ENCODE measurements at regions of chr20 and their contacts with region 1.

Region 1: DNA sequence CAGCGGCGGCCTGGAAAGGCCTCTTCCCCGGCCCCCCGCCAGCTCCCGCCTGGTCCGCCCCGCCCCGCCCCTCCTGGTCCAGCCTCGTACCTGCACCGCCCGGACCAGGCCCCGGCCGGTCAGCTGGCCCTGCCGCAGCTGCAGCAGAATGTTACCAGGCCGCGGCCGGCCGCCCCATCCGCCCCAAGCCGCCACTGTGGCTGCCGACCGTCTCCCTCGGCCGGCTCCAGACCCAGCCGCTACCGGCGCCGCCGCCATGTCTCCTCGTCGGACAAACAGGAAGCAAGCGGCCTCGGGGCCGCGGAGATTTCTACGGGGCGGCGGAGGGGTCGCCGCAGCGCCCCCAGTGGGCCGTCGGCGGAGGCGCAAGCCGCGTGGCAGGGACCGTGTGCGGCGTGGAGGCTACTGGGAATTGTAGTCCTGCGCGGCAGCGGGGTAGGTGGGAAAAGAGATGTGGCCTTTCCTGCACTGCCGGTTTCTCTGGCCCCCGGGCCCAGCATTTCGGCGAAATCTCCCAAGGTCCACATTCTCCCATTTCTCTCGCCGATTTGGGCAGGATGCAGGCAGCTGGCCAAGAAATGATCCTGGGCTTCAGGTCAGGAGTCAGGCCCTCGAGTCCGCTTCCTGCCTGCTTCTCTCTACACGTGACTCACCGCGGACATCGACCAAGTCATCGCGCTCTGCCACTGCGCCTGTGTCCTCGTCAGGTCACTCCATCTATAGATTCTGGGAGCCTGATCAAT is at the start of gene TRPC4AP:
- DNase-seq: peak; percentile 78 to 98 (median 86)

Region 2: GRCh38 chr20:34872622-34873224 is 220.0 kb before region 1 on chr20 and contains the start of gene GGT7:
- intact Hi-C with region 1: loop called (anchors 2 kb)
- DNase-seq: peak; percentile 79 to 97 (median 86)

Region 3: DNA sequence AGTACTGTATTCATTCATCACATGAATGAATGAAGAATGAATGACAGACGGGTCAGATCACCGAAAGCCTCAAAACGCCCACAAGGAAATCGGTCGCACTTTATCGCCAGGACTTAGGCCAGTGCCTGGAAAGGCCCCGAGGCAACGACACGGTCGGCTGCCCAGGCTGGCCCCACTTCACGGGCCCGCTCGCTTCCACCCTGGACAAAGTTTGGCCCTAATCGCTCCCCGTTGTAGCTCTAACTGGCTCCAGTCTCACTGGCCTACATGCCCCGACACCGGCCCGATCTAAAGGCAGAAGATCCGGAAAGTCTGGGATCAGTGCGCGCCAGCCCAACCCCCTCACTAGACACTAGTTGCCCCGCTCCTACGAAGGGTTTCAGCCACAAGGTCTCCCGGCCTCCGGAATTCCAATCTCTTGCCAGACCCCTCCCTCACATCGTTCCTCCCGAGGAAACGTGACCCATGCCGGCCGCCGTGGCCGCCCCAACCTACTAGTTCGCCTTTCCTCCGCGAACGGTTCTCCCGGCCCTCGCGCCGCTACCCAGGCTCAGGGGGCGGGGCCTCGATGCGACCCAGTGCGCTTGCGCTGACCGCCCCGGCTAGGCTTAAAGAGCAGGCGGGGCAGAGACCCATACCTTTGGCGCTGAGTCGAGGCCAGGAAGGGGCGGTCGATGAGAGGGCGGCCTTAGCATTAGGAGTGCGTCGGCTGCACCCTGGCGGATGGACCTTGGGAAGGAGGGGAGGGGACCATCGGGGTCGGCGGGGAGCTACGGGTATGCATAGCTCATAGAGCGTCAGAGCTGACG is 137.3 kb before region 1 on chr20 and contains the starts of genes GSS and MYH7B:
- intact Hi-C with region 1: loop called (anchors 2 kb)
- DNase-seq: peak; percentile 93 to 99 (median 96)

Region 4: DNA sequence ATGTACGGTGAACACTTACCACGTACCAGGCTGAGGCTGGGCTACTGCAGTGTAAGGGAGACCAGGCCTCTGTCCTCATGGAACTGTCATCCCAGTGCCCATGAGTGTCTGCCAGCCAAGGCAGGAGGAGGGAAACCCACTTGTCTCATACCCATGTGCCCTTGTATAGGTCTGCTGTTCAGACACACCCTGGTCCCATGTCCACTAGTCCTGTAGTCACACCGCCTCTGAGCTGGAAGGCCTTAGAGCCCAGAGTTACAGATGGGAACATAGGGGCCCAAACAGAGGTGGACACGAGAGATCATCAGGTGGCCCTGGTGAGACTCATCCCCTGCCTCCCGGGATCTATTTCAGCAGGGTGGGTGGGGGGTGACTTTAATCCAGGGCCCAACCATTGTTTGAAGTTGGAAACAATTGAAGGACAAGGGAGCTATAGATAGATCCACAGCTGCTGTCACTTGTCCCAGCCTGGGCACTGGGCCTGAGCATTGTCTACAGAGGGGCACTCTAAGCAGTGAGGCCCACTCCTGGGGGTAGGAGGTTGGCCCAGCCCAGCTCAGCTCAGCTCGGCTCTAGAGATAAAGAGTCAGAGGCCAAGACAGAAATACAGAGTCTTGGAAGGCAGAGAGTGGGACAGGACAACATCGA is 122.4 kb before region 1 on chr20:
- intact Hi-C with region 1: loop called (anchors 5 kb)
- DNase-seq: peak in 8 of 10 donors; percentile 48 to 96 (median 68)

Region 5: GRCh38 chr20:34997131-34997561 is 95.5 kb before region 1 on chr20:
- intact Hi-C with region 1: loop called (anchors 5 kb)
- DNase-seq: peak; percentile 36 to 97 (median 77)

Region 6: DNA sequence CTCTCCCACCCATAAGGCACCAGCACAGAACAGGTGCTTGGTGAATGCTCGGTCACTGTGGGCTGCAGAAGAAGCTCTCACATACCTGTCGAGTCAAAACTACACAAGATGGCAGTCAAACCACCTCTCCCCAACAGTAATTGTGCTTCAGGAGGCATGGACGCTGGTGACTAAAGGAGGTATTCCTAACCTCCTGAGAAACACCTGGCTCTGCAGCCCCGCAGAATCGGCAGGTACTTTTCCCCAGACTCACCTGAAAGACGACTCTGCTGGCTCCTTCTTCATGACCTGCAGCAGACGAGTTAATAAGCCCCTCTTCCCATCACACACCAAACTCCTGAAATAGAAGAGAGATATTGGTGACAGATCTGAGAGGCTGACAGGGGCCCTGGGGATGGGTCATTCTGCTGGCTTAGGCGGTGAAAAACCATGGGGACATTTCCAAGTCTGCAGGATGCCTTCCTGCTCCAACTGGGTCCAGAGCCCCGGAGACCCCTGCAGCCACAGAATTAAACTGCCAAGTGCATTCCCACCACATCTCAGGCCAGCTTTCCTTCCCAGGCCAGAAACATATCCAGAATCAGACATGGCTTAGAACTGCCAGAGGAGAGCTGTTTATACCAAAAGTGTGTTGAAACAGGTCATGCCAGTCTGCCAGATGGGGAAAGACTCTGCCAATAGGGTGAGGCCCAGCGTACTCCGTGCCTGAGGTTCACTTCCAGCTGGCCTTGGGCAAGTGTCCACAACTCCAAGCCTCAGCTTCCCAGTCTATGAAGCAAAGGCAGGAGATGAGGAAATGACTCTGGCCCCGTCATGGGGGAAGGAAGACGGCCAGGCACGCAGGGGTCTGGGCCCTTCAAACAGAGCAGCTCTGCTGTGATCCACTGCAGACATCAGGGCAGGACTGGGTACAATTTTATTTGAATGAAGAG is 84.0 kb before region 1 on chr20:
- intact Hi-C with region 1: no loop called
- DNase-seq: peak in 6 of 10 donors; percentile 1 to 80 (median 23)

Region 7: GRCh38 chr20:35146920-35147574 is 54.4 kb after region 1 on chr20 and contains the start of gene EDEM2:
- intact Hi-C with region 1: loop called (anchors 2 kb)
- DNase-seq: peak; percentile 92 to 99 (median 96)

Region 8: DNA sequence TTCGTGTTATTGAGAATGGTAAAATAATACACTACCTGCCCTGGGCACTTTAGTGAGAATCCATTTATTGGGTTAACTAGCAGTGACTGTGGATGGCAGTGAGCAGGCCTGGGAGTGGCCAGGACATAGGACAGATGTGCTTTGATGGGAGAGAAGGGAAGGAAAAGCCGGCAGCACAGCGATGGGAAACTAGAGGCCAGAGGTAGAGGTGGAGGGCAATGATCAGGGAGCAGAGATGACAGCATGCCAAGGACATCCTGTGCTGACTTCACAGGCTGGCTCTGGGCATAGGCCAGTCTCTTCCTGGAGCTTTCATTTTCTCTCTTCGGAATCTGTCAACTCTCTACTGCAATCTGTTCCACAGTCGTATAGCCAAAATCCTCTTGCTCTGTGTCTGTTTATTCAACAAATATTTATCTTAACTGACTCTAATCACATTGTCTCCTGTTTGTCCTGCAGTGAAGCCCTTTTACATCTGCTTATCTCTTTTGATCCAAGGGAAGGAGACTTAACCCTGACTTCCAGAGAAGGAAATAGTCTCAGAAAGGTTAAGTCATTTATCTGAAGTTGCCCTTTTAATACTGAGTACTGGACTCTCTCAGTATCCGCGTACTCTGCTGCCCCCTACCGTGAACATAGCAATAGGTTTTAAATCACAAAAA is 115.4 kb after region 1 on chr20:
- intact Hi-C with region 1: loop called (anchors 1 kb)
- DNase-seq: peak in 8 of 10 donors; percentile 26 to 91 (median 80)